Activated CD8-positive, alpha-beta memory T cell treated with anti-CD3 and anti-CD28 coated beads, Interleukin-2, amount 10 ng/mL, durations not matched to agents 7 days and 5 days (primary cell): ENCODE measurements at regions of chr16 and their contacts with region 1.

Region 1: GRCh38 chr16:85305996-85306792 is 193.9 kb upstream of the CIBAR2 start:
- DNase-seq: peak; percentile 93
- ATAC-seq: peak; percentile 93
- H3K4me3 Mint-ChIP-seq: no peak overlapping the region
- H3K27ac Mint-ChIP-seq: peak overlapping the region; percentile 81
- H3K4me1 Mint-ChIP-seq: peaks cover 56% of the 10 kb centered on the region
- H3K27me3 Mint-ChIP-seq: peaks cover 4% of the 10 kb centered on the region

Region 2: GRCh38 chr16:85289760-85290625 is 16.2 kb before region 1 on chr16:
- CTCF ChIA-PET with region 1: no interaction called
- DNase-seq: no peak
- ATAC-seq: no peak
- H3K4me3 Mint-ChIP-seq: no peak overlapping the region
- H3K27ac Mint-ChIP-seq: no peak overlapping the region
- H3K4me1 Mint-ChIP-seq: no peaks in the 10 kb centered on the region
- H3K27me3 Mint-ChIP-seq: no peaks in the 10 kb centered on the region

Region 3: GRCh38 chr16:85319208-85319983 is 13.2 kb after region 1 on chr16:
- CTCF ChIA-PET with region 1: interaction called, 11 read pairs
- DNase-seq: no peak
- ATAC-seq: no peak
- H3K4me3 Mint-ChIP-seq: no peak overlapping the region
- H3K27ac Mint-ChIP-seq: no peak overlapping the region
- H3K4me1 Mint-ChIP-seq: peaks cover 2% of the 10 kb centered on the region
- H3K27me3 Mint-ChIP-seq: no peaks in the 10 kb centered on the region

Region 4: GRCh38 chr16:85330694-85331188 is 24.5 kb after region 1 on chr16:
- CTCF ChIA-PET with region 1: interaction called, 11 read pairs
- DNase-seq: no peak
- ATAC-seq: peak; percentile 64
- H3K4me3 Mint-ChIP-seq: no peak overlapping the region
- H3K27ac Mint-ChIP-seq: no peak overlapping the region
- H3K4me1 Mint-ChIP-seq: peaks cover 6% of the 10 kb centered on the region
- H3K27me3 Mint-ChIP-seq: peaks cover 31% of the 10 kb centered on the region